ENCODE measurements at regions of chr6 and their contacts with region 1.

Region 1: DNA sequence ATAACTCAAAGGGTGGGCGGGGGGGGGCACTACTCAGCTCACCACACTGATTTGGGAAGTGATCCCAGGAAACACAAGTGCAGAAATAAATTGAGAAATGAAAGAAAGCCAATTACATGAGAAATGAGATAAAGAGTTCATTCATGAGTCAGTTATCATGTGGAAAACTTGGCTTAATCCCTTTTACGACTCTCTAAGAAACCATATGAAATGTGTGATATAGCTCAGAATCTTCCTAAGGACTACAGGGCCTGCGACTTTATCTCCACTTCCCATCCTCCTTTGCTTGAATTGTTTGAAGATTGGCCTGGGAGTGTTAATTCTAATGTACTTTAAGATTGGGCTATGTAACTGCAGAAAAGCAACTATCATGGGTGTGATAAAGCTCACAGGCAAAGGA is 3.6 kb upstream of the BTN2A2 start:
- DNase-seq: no peak
- CTCF ChIP-seq: no peak

Region 2: GRCh38 chr6:26363882-26364701 is 15.2 kb before region 1 on chr6:
- CTCF ChIA-PET with region 1: interaction called, 15 read pairs
- POLR2A ChIA-PET with region 1: no interaction called
- DNase-seq: no peak
- CTCF ChIP-seq: no peak

Region 3: DNA sequence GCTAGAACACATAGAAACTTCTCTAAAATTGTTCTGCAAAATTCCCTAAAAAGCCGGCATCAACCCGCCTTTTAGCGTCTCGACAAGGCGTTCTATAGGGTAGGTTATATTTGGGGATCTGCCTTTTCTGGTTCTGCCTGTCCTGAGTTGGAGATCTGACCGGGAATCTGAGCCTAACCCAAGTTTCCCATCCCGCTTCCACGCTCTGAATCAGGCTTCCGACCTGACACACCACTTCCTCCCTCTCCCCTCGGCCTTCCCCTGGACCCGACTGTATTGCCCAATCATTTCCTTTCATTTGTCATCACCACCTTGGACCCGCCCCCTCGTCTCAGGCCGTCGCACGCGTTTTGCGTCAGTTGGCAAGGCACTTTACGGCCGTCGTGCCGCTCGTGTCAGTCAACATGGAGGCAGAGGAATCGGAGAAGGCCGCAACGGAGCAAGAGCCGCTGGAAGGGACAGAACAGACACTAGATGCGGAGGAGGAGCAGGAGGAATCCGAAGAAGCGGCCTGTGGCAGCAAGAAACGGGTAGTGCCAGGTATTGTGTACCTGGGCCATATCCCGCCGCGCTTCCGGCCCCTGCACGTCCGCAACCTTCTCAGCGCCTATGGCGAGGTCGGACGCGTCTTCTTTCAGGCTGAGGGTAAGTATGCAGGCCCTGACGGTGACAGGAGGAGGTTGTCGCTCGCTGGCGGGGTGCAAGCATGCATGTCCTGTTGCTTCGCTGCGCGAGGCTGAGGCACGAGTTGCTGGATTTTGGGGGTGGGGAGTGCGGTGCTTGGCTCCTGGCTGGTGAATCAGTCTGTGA is 217.5 kb after region 1 on chr6 and contains the start of gene ABT1:
- CTCF ChIA-PET with region 1: no interaction called
- POLR2A ChIA-PET with region 1: no interaction called
- DNase-seq: peak; percentile 96
- CTCF ChIP-seq: no peak

Measured in GM10248 (cell line).